Activated CD4-positive, alpha-beta T cell treated with anti-CD3 and anti-CD28 coated beads, Interleukin-2, amount 10 ng/mL, durations not matched to agents 7 days and 5 days (primary cell): ENCODE measurements at regions of chr16 and their contacts with region 1.

Region 1: DNA sequence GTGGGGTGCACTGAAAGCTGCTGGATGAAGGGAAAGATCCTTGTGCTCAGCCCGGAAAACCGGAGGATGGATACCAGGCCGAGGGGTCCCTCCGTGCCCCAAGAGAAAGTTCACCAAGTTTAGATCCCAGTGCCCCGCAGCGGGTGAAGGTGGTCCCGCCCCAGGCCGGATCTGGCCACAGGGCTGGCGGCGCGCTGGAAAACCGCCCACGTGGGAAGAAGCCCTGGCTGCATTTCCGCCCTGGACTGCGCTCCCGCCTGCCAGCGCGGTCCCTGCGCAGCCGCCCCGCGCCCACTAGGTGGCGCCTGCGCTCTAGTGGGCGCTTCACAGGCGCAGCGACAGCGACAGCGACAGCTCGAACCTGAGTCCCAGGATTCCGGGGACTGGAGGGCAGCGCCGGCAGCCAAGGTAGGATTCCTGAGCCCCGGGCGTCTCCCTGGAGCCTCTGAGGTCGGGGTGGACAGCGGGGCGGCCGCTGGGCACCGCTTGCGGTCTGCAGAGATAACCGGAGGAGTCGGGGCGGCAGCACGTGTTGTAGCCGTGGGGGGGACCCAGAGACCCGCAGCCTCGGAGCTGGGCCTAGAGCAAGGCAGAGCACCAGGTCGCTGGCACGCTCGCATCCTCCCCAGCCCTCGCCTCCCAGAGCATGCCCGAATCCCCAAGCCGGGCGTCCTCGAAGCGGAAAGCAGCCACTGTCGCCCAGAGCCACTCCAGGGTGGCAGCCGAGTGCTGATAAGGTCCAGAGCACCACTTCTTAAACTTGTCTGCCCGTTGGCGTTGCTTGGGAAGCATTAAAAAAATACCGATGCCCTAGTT is at the start of gene CHD9:
- DNase-seq: peak; percentile 71
- H3K4me3 Mint-ChIP-seq: peak within 1 kb of the TSS; percentile 77
- H3K27ac Mint-ChIP-seq: peak within 1 kb of the TSS; percentile 89
- H3K4me1 Mint-ChIP-seq: peaks cover 47% of the 10 kb centered on the region
- H3K27me3 Mint-ChIP-seq: no peaks in the 10 kb centered on the region
- total RNA-seq, gene CHD9: 20.5 to 23.9 TPM

Region 2: GRCh38 chr16:53007095-53007494 is 47.8 kb before region 1 on chr16:
- CTCF ChIA-PET with region 1: no interaction called
- POLR2A ChIA-PET with region 1: no interaction called
- DNase-seq: no peak
- H3K4me3 Mint-ChIP-seq: no peak overlapping the region
- H3K27ac Mint-ChIP-seq: no peak overlapping the region
- H3K4me1 Mint-ChIP-seq: no peaks in the 10 kb centered on the region
- H3K27me3 Mint-ChIP-seq: peaks cover 21% of the 10 kb centered on the region

Region 3: GRCh38 chr16:53065461-53066061 is 10.7 kb after region 1 on chr16:
- CTCF ChIA-PET with region 1: interaction called, 22 read pairs
- POLR2A ChIA-PET with region 1: no interaction called
- DNase-seq: no peak
- H3K4me3 Mint-ChIP-seq: no peak overlapping the region
- H3K27ac Mint-ChIP-seq: no peak overlapping the region
- H3K4me1 Mint-ChIP-seq: peaks cover 56% of the 10 kb centered on the region
- H3K27me3 Mint-ChIP-seq: no peaks in the 10 kb centered on the region